AG04450 (cell line): ENCODE measurements at regions of chr15 and their contacts with region 1.

Region 1: GRCh38 chr15:82999905-83000671 is 11.4 kb downstream of the C15orf40 start:
- DNase-seq: no peak
- H3K4me3 ChIP-seq: peak overlapping the region; percentile 45
- H3K27ac ChIP-seq: no peak overlapping the region
- H3K27me3 ChIP-seq: no peaks in the 10 kb centered on the region
- CTCF ChIP-seq: peak; percentile 55

Region 2: DNA sequence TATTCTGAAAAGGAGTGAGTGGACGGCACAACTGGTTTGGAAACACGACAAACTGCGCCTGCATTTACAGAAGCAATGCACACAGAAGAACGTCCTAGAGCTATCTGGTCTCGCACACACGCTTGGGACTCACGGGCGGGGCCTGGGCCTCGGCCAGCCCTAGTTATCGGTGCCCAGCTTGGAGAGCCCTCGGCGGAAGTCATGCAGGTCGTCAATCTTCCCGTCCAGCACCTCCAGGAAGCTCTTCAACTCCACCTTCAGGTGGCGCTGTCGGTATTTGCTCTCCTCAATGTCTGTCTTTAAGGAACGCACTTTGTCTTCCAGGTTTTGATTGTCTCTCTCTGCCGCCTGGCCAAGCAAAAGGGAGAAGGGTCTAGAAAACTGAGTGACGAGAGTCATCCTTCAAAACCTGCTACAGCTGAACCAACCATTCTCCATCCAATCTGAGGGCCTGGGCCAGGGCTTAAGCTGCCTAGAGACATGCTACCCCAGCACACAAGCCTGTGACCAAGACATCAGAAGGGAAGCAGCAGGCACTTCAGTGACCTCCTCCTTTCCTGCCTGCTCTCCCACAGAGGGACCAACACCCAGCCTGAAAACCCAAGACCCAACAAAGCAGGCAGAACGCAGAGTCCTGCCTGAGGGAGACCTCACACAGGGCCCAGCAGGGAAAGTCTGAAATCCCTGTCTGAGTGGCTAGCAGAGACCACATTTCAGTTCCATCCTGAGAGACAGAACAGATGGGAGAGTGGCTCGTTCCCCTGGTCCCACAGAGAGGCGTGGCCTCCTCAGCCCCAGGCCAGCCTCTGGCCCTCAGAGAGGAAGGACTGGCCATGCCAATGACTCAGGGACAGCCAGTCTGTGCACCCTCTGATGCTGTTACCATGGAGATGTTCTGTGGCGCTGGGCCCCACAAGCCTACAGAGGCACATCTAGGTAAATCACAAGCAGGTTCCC is 150.3 kb before region 1 on chr15:
- CTCF ChIA-PET with region 1: interaction called, 12 read pairs
- POLR2A ChIA-PET with region 1: no interaction called
- DNase-seq: no peak
- H3K4me3 ChIP-seq: no peak overlapping the region
- H3K27ac ChIP-seq: no peak overlapping the region
- H3K27me3 ChIP-seq: no peaks in the 10 kb centered on the region
- CTCF ChIP-seq: peak; percentile 64

Region 3: GRCh38 chr15:82936960-82937711 is 63.0 kb before region 1 on chr15:
- CTCF ChIA-PET with region 1: no interaction called
- POLR2A ChIA-PET with region 1: no interaction called
- DNase-seq: no peak
- H3K4me3 ChIP-seq: no peak overlapping the region
- H3K27ac ChIP-seq: no peak overlapping the region
- H3K27me3 ChIP-seq: peaks cover 2% of the 10 kb centered on the region
- CTCF ChIP-seq: no peak

Region 4: GRCh38 chr15:83077491-83078230 is 77.6 kb after region 1 on chr15:
- CTCF ChIA-PET with region 1: no interaction called
- POLR2A ChIA-PET with region 1: no interaction called
- DNase-seq: no peak
- H3K4me3 ChIP-seq: no peak overlapping the region
- H3K27ac ChIP-seq: no peak overlapping the region
- H3K27me3 ChIP-seq: peaks cover 17% of the 10 kb centered on the region
- CTCF ChIP-seq: no peak

Region 5: GRCh38 chr15:83115831-83116565 is 115.9 kb after region 1 on chr15:
- CTCF ChIA-PET with region 1: no interaction called
- POLR2A ChIA-PET with region 1: no interaction called
- DNase-seq: no peak
- H3K4me3 ChIP-seq: no peak overlapping the region
- H3K27ac ChIP-seq: no peak overlapping the region
- H3K27me3 ChIP-seq: no peaks in the 10 kb centered on the region
- CTCF ChIP-seq: no peak